ENCODE measurements at regions of chr10 and their contacts with region 1.

Region 1: GRCh38 chr10:104121520-104122224 is at the start of gene SFR1:
- DNase-seq: peak; percentile 93
- ATAC-seq: peak; percentile 93
- H3K4me3 ChIP-seq: peak within 1 kb of the TSS; percentile 98
- H3K27ac ChIP-seq: peak within 1 kb of the TSS; percentile 94
- H3K4me1 ChIP-seq: peaks cover 11% of the 10 kb centered on the region; the same call in 1 of the 2 replicates
- H3K27me3 ChIP-seq: no peaks in the 10 kb centered on the region; a peak in 1 of 4 replicates
- CTCF ChIP-seq: peak; percentile 56 to 81 (median 64); a peak in 5 of 6 replicates
- EP300 ChIP-seq: 0 out of 4 replicates have a peak, but pooled peaks of 1 of the 2 experiments have one; percentile 3
- POLR2A ChIP-seq: peak; percentile 87
- RAD21 ChIP-seq: 0 out of 2 replicates have a peak, but pooled peaks have one; percentile 20
- polyA plus RNA-seq, gene SFR1: 25.4 to 31.5 TPM

Region 2: DNA sequence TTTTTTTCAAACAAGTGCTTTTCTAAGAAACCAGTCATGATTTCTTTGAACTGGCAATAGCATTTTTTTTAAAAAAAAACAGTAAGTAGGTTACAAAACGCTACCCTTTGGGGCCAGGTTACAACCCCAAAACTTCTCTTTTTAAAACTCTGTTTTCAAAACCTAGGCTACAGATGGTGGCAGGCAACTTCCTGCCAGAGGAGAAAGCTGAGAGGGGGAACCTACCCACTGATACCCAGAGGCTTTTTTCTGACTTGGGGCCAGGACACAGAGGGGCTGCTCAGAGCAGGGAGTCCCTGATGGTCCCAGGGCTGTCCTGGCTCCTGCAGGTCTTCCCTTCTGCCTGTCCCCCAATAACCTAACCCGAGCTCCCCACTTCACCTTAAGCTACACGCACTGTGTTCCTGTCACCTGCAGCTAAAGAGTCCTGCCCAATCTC is 210.6 kb before region 1 on chr10:
- CTCF ChIA-PET with region 1: interaction called, 3 read pairs
- POLR2A ChIA-PET with region 1: interaction called, 5 read pairs
- RAD21 ChIA-PET with region 1: interaction called, 8 read pairs
- SMC1A ChIA-PET with region 1: interaction called, 10 read pairs
- in situ Hi-C with region 1: no loop called
- intact Hi-C with region 1: loop called (anchors 5 kb)
- DNase-seq: no peak
- ATAC-seq: peak; percentile 20
- H3K4me3 ChIP-seq: no peak overlapping the region
- H3K27ac ChIP-seq: peak overlapping the region; percentile 63
- H3K4me1 ChIP-seq: peaks cover 29% of the 10 kb centered on the region
- H3K27me3 ChIP-seq: no peaks in the 10 kb centered on the region
- CTCF ChIP-seq: no peak
- EP300 ChIP-seq: no peak
- POLR2A ChIP-seq: no peak
- RAD21 ChIP-seq: no peak

Region 3: GRCh38 chr10:103983367-103983911 is 138.2 kb before region 1 on chr10:
- CTCF ChIA-PET with region 1: interaction called, 46 read pairs
- POLR2A ChIA-PET with region 1: interaction called, 8 read pairs
- RAD21 ChIA-PET with region 1: interaction called, 38 read pairs
- SMC1A ChIA-PET with region 1: interaction called, 22 read pairs
- in situ Hi-C with region 1: no loop called
- intact Hi-C with region 1: loop called (anchors 5 kb)
- DNase-seq: peak; percentile 40
- ATAC-seq: peak; percentile 86
- H3K4me3 ChIP-seq: no peak overlapping the region
- H3K27ac ChIP-seq: peak overlapping the region; percentile 65
- H3K4me1 ChIP-seq: peaks cover 7% of the 10 kb centered on the region; the same call in 1 of the 2 replicates
- H3K27me3 ChIP-seq: no peaks in the 10 kb centered on the region
- CTCF ChIP-seq: no peak
- EP300 ChIP-seq: no peak
- POLR2A ChIP-seq: no peak
- RAD21 ChIP-seq: no peak

Region 4: GRCh38 chr10:104045151-104046089 is 76.3 kb before region 1 on chr10:
- CTCF ChIA-PET with region 1: interaction called, 7 read pairs
- POLR2A ChIA-PET with region 1: no interaction called
- RAD21 ChIA-PET with region 1: interaction called, 5 read pairs
- SMC1A ChIA-PET with region 1: interaction called, 15 read pairs
- in situ Hi-C with region 1: no loop called
- intact Hi-C with region 1: no loop called
- DNase-seq: no peak
- ATAC-seq: peak; percentile 88
- H3K4me3 ChIP-seq: no peak overlapping the region
- H3K27ac ChIP-seq: no peak overlapping the region
- H3K4me1 ChIP-seq: no peaks in the 10 kb centered on the region
- H3K27me3 ChIP-seq: peaks cover 0 to 3% of the 10 kb centered on the region in 2 experiments; a peak in 3 of 4 replicates
- CTCF ChIP-seq: peak in 2 of 3 experiments; percentile 39 to 51; a peak in 3 of 6 replicates
- EP300 ChIP-seq: no peak
- POLR2A ChIP-seq: no peak
- RAD21 ChIP-seq: peak; percentile 54

Region 5: DNA sequence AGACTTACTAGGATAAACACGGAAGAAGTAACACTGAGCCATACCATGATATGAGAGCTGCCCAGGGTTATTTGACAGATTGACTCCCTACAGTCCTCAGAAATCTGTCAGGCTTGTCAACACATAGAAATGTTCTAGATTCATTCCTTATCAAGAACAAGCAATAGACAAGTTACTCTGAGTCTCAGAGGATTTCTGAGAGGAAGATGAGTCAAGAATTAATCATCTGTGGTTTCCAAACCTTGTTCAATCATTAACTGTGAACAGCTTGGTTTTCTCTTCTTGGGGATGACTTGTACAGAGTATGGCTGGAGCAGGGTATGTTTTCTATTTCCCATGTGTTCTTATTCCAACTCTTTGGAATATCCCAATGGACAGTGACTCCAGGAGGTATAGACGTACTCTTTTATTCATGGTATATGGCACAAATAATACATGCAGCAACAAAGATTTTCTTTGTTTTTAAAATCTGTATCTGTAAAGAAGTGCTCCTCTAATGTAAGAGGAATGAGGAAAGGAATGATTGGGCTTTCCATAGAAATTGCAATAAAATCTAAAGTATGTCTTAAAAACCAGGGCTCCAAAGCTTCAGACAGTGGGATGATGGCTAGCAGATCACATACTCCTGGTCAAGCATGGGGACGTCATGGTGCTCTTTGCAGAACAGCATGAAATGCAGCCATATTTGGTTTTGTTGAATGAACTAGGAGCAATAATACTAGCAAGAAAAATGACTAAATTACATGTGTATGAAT is 11.6 kb before region 1 on chr10:
- CTCF ChIA-PET with region 1: interaction called, 47 read pairs
- POLR2A ChIA-PET with region 1: interaction called, 36 read pairs
- RAD21 ChIA-PET with region 1: interaction called, 38 read pairs
- SMC1A ChIA-PET with region 1: interaction called, 58 read pairs
- in situ Hi-C with region 1: no loop called
- intact Hi-C with region 1: no loop called
- DNase-seq: peak; percentile 40
- ATAC-seq: peak; percentile 97
- H3K4me3 ChIP-seq: no peak overlapping the region
- H3K27ac ChIP-seq: no peak overlapping the region
- H3K4me1 ChIP-seq: no peaks in the 10 kb centered on the region
- H3K27me3 ChIP-seq: no peaks in the 10 kb centered on the region
- CTCF ChIP-seq: no peak
- EP300 ChIP-seq: 0 out of 4 replicates have a peak, but pooled peaks of 1 of the 2 experiments have one; percentile 20
- POLR2A ChIP-seq: no peak
- RAD21 ChIP-seq: no peak

Region 6: DNA sequence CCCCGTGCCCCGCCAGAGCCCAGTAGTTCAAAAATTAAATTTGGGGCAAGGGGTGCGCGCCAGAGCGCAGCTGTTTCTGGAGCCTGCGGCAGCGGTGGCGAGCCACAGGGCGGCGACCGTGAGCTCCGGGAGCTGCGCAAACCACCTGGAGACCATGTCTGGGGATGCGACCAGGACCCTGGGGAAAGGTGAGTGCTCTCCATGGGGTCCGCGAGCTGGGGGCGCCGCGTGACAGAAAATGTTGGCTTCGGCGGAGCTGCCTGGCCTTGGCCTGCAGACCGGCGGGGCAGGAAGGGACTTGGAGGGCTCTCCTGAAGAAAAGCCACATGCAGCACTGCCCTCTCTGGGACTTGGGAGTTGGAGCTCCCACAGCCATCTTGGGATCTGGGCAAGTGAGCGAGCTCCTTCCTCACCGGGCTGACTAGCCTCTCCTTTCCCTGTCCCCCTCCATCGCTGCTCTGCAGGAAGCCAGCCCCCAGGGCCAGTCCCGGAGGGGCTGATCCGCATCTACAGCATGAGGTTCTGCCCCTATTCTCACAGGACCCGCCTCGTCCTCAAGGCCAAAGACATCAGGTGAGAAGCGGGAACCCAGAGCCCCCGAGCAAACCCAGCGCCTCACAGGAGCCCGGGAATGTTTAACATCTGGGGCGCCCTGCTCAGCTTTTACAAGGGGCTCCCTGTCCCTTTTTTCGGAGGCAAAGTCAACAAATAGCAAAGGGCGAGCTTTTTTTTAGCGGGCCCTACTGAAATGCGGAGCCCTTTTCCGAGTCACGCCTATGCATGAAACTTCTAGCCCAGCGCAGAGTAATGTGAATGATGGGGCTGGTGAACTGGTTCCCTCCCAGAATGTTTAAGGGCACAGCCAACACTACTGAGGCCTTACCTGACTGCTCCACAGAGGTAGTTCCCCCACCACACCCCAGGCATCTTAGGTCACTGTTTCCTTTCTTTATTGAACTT is 153.4 kb after region 1 on chr10:
- CTCF ChIA-PET with region 1: interaction called, 15 read pairs
- POLR2A ChIA-PET with region 1: no interaction called
- RAD21 ChIA-PET with region 1: interaction called, 5 read pairs
- SMC1A ChIA-PET with region 1: no interaction called
- in situ Hi-C with region 1: no loop called
- intact Hi-C with region 1: no loop called
- DNase-seq: no peak
- ATAC-seq: peak; percentile 97
- H3K4me3 ChIP-seq: no peak overlapping the region
- H3K27ac ChIP-seq: no peak overlapping the region
- H3K4me1 ChIP-seq: no peaks in the 10 kb centered on the region
- H3K27me3 ChIP-seq: peaks cover 2% of the 10 kb centered on the region in 2 experiments; a peak in 3 of 4 replicates
- CTCF ChIP-seq: peak; percentile 69 to 97 (median 86)
- EP300 ChIP-seq: no peak
- POLR2A ChIP-seq: no peak
- RAD21 ChIP-seq: peak; percentile 36; the same call in 1 of the 2 replicates